ENCODE measurements at regions of chr11 and their contacts with region 1.

Region 1: DNA sequence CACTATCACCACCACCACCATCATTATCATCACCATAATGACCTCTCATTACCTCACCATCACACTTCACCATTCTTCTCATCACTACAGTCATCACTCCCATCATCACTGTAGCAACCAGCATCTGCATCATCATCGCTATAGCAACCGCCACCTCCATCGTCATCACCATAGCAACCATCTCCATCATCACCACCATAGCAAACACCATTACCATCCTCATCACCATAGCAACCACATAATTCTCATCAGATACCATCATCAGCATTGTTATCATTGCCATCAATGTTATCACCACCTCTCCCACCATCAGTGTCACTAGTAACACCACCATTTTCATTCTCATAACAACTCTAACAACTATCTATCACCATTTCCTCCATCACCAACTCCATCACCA is 23.1 kb upstream of the CD82 start:
- DNase-seq: no peak
- ATAC-seq: no peak
- H3K4me3 ChIP-seq: no peak overlapping the region
- H3K27ac ChIP-seq: no peak overlapping the region
- H3K4me1 ChIP-seq: peaks cover 4% of the 10 kb centered on the region
- H3K27me3 ChIP-seq: no peaks in the 10 kb centered on the region
- CTCF ChIP-seq: no peak

Region 2: DNA sequence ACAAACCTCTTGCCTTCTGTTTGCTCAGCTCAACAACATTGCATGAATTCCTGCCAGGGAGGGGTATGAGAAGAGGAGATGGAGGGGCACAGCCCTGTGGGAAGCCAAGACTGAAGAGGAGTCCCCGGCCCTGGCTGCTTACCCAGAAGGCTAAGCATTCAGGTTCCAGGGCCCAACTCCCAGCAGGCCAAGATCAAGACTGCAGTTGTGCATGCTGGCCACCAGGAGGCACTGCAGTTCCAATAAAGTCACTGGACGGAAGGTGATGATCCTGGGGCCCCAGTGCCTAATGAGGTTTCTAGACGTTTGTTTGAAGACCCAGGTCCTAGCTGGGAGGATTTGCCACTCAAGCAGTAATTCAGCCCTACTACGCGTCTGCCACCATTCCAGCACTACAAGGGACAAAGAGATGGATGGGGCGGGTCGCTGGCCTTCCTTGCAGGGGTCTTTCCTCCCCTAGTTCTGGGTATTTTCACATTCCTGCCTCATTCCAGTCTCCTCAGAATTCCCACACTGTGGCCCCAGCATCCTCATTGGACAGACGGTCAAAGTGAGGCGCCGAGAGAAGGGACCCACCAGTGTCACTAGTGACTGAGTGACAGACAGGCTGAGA is 256.0 kb before region 1 on chr11:
- intact Hi-C with region 1: loop called (anchors 10 kb)
- DNase-seq: peak; percentile 59
- ATAC-seq: peak; percentile 82 to 83
- H3K4me3 ChIP-seq: no peak overlapping the region
- H3K27ac ChIP-seq: no peak overlapping the region
- H3K4me1 ChIP-seq: no peaks in the 10 kb centered on the region
- H3K27me3 ChIP-seq: no peaks in the 10 kb centered on the region
- CTCF ChIP-seq: peak; percentile 95

Region 3: DNA sequence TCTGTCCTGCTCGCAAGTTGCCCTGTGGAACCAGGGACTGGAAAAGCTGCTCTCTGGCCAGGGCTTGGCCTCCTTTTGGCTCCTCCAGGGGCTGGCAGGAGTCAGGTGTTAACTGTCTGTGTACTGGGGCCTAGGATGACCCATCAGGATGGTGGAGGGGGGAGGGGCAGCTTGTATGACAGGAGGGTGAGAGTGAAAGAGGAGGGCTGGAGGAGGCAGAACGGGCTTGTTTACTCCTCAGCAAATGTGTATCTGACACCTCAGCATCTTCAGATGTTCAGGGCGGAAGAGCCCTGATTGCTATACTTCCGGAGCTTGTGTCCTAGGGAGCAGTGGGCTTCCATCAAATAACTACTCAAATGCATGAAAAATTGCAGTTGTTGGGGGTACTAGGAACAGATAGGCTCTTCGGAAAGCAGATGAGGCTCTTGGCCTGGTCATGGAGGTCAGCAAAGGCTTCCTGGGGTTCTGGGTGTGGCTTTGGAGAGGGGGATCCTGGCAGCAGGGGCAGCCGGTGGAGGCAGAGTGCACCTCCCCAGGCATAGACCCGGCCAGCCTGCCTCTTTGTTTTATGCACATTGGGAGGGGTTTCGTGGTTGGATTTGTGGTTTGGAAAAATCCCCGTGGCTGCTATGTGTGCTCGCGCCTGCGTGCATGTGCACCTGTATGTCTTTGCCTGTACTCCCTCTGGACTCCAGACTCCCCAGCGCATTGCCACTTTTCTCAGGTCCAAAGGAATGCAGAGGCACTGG is 54.3 kb after region 1 on chr11:
- intact Hi-C with region 1: no loop called
- DNase-seq: no peak
- ATAC-seq: no peak
- H3K4me3 ChIP-seq: no peak overlapping the region
- H3K27ac ChIP-seq: peak overlapping the region; percentile 72
- H3K4me1 ChIP-seq: peaks cover 69% of the 10 kb centered on the region
- H3K27me3 ChIP-seq: no peaks in the 10 kb centered on the region
- CTCF ChIP-seq: no peak

Measured in lower lobe of right lung (tissue), 2 donors.